Activated T-helper 1 cell treated with anti-CD3 and anti-CD28 coated beads, Interleukin-12 subunit alpha, Interleukin-12 subunit beta, Interleukin-2, Interleukin-4 antibody, amounts not matched to agents 30 ng/mL and 10 ng/mL and 1 ng/mL, durations not matched to agents 14 hours and 24 hours and 36 hours (primary cell): ENCODE measurements at regions of chr7 and their contacts with region 1.

Region 1: DNA sequence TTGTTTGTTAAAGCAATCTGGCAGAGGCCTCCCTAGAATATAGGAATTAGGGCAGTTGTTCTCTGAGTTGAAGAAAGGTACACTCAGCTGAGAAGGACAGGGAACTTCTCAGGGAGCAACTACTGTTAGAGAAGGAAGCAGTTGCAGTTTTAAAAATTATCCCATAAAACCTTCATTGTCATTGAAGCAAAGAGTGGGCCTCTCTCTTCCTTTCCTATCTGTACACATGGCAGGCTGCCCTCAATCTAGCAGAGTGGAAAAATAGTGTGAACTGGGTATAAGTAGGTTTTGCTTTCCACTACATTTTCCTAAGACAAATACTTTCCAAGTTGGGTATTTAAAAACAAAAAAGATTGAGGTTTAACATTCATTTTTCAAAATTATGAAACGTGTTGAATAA is 236.7 kb upstream of the KLF14 start:
- DNase-seq: no peak
- H3K4me3 Mint-ChIP-seq: peak overlapping the region; percentile 37
- H3K27ac Mint-ChIP-seq: peak overlapping the region; percentile 94
- H3K4me1 Mint-ChIP-seq: peaks cover 76% of the 10 kb centered on the region
- H3K27me3 Mint-ChIP-seq: no peaks in the 10 kb centered on the region

Region 2: GRCh38 chr7:130941322-130942210 is 29.1 kb before region 1 on chr7:
- intact Hi-C with region 1: loop called (anchors 1 kb)
- DNase-seq: no peak
- H3K4me3 Mint-ChIP-seq: peak overlapping the region; percentile 65
- H3K27ac Mint-ChIP-seq: peak overlapping the region; percentile 76
- H3K4me1 Mint-ChIP-seq: peaks cover 94% of the 10 kb centered on the region
- H3K27me3 Mint-ChIP-seq: no peaks in the 10 kb centered on the region

Region 3: GRCh38 chr7:130982160-130982638 is 11.5 kb after region 1 on chr7:
- intact Hi-C with region 1: loop called (anchors 1 kb)
- DNase-seq: no peak
- H3K4me3 Mint-ChIP-seq: no peak overlapping the region
- H3K27ac Mint-ChIP-seq: no peak overlapping the region
- H3K4me1 Mint-ChIP-seq: peaks cover 21% of the 10 kb centered on the region
- H3K27me3 Mint-ChIP-seq: no peaks in the 10 kb centered on the region

Region 4: DNA sequence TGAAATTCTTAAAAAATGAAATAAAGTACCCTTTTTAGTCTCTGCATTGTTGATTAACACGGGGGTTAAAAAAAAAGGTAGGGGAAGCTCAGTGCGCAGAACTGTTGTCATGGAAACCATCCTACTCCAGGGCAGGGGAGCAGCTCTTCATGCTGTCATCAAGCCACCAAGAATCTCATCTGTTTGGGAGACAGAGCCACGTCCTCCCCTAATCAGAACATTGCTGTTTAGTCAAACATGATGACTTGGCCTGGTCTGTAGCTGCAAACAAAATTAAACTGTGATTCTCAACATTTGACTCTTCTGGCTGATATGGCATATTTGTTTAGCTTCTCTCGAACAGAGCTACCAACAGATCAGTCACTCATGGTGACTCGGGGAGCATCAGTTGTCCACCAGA is 17.7 kb after region 1 on chr7:
- intact Hi-C with region 1: loop called (anchors 2 kb)
- DNase-seq: no peak
- H3K4me3 Mint-ChIP-seq: no peak overlapping the region
- H3K27ac Mint-ChIP-seq: peak overlapping the region; percentile 50
- H3K4me1 Mint-ChIP-seq: peaks cover 44% of the 10 kb centered on the region
- H3K27me3 Mint-ChIP-seq: no peaks in the 10 kb centered on the region

Region 5: DNA sequence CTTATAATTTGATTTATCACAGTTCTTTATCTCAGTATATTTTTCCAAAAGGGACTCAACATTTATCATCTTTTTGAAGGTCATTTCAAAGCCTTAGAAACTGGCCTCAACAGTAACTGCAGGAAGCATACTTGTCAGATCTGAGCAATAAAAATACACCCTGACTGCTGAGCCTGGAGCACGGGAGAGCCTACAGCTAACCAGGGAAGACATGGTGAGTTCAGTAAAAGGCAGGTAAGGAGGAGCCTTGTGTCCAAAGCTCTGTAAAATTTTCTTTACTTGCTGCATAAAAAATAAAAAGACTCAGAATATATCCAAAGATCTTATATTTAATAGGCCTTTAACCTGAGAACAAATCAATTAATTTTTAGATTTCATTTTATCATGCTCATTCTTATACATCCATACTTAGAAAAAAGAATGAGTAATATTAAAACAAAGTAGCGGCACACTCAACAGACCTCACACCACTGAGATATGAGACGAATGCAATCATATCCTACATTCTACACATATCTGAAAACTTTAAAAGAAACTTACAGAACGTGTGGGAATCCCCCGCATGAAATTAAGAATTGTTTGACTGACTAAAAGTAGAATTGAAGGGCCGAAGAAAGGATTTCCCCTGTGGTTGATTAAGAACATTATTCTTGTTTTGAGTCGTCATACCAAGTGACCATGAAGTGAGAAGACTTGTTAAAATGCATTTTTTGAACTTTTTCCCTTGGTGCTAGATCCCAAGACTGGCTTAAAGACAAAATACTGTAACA is 60.6 kb after region 1 on chr7:
- intact Hi-C with region 1: loop called (anchors 1 kb)
- DNase-seq: no peak
- H3K4me3 Mint-ChIP-seq: peak overlapping the region; percentile 42
- H3K27ac Mint-ChIP-seq: peak overlapping the region; percentile 81
- H3K4me1 Mint-ChIP-seq: peaks cover 79% of the 10 kb centered on the region
- H3K27me3 Mint-ChIP-seq: no peaks in the 10 kb centered on the region